Activated T-helper 1 cell treated with anti-CD3 and anti-CD28 coated beads, Interleukin-12 subunit alpha, Interleukin-12 subunit beta, Interleukin-2, Interleukin-4 antibody, amounts not matched to agents 30 ng/mL and 10 ng/mL and 1 ng/mL, durations not matched to agents 14 hours and 24 hours and 36 hours (primary cell): ENCODE measurements at regions of chr17 and their contacts with region 1.

Region 1: DNA sequence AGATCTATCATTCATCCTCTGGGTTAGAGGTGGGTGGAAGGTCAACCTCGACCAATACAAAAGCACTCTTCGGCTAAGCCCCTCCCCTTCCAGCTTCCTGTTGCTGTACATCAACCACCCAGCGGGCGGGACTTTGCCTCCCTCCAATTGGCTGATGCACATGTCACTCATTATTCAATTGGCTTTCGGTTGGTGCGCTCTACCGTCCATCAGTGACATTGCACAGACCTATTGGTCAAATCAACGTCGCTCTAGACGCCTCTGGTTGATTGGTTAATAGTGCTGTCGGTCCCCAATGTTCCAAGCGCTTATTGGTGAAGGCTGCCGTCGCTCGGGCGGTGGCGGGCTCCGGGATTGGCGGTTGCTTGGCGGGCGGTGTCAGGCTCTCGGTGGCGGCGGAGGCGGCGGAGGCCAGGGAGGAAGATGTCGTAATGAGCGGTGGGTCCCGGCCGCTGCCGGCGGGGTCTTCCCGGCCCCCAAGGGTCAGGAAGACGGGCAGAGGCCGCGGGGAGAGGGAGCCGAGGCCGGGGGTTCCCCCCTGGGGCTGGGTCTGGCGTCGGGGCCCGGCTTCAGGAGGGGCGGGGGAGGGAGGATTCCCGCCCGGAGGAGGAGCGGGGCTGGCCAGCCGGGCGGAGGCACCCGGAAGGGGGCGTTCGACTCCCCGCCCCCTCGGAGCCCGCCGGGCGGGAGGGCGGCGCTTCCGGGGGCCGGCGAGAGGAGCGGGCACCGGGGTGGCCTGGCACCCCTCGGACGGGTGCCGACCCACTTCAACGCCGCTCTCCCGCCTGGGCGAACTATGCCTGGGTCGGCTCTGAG is at the start of gene SP2:
- DNase-seq: peak; percentile 100
- H3K4me3 Mint-ChIP-seq: peak within 1 kb of the TSS; percentile 98
- H3K27ac Mint-ChIP-seq: peak within 1 kb of the TSS; percentile 100
- H3K4me1 Mint-ChIP-seq: peaks cover 47% of the 10 kb centered on the region
- H3K27me3 Mint-ChIP-seq: peaks cover 3% of the 10 kb centered on the region
- total RNA-seq, gene SP2: 24.0 and 26.3 TPM in 2 replicates

Region 2: GRCh38 chr17:47831003-47831933 is 64.8 kb before region 1 on chr17 and contains the starts of genes LRRC46 and MRPL10:
- intact Hi-C with region 1: loop called (anchors 1 kb)
- DNase-seq: peak; percentile 92
- H3K4me3 Mint-ChIP-seq: peak within 1 kb of the TSS; percentile 90
- H3K27ac Mint-ChIP-seq: peak within 1 kb of the TSS; percentile 88
- H3K4me1 Mint-ChIP-seq: peaks cover 43% of the 10 kb centered on the region
- H3K27me3 Mint-ChIP-seq: peaks cover 1% of the 10 kb centered on the region
- total RNA-seq, gene LRRC46: 0.39 and 0.70 TPM in 2 replicates
- total RNA-seq, gene MRPL10: 53.6 and 56.9 TPM in 2 replicates

Region 3: GRCh38 chr17:47949136-47949759 is 53.2 kb after region 1 on chr17:
- intact Hi-C with region 1: loop called (anchors 1 kb)
- DNase-seq: peak; percentile 76
- H3K4me3 Mint-ChIP-seq: peak overlapping the region; percentile 70
- H3K27ac Mint-ChIP-seq: peak overlapping the region; percentile 76
- H3K4me1 Mint-ChIP-seq: peaks cover 41% of the 10 kb centered on the region
- H3K27me3 Mint-ChIP-seq: no peaks in the 10 kb centered on the region

Region 4: DNA sequence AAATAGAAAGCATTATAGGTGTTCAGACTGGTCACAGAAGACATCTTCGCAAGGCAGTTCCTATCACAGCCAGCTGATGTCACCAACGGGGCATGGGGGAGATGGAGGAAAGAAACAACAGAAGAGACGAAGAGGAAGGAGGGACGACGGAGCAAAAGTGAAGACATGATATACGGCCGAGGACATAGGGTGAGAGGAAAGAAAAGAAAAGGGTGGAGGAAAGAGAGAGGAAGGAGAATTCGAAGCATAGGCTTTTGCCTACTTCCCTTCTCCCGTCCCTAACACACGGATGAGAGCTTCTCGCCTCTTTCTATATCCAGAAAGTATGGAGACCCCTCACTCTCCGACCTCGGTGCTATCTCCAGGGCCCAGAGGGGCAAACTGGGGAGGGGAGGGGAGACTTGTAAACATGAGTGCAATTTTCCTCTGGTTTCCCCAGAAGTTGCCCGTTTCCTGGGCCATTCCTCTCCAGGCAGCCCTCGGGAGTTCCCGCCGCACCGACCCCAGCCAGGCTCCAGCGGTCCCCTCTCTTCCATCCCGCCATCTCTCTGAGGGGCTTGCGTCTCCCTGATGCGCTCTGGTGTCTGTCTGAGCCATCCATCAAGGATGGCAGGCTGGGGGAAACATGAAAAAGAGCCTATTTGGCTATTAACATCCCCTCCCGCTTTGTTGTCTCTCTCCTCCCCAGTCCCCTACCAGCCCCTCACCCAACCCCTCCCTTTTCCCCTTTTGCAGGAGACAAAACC is 115.5 kb after region 1 on chr17:
- intact Hi-C with region 1: loop called (anchors 5 kb)
- DNase-seq: peak; percentile 44
- H3K4me3 Mint-ChIP-seq: peak overlapping the region; percentile 84
- H3K27ac Mint-ChIP-seq: peak overlapping the region; percentile 37
- H3K4me1 Mint-ChIP-seq: peaks cover 6% of the 10 kb centered on the region
- H3K27me3 Mint-ChIP-seq: peaks cover 24% of the 10 kb centered on the region

Region 5: DNA sequence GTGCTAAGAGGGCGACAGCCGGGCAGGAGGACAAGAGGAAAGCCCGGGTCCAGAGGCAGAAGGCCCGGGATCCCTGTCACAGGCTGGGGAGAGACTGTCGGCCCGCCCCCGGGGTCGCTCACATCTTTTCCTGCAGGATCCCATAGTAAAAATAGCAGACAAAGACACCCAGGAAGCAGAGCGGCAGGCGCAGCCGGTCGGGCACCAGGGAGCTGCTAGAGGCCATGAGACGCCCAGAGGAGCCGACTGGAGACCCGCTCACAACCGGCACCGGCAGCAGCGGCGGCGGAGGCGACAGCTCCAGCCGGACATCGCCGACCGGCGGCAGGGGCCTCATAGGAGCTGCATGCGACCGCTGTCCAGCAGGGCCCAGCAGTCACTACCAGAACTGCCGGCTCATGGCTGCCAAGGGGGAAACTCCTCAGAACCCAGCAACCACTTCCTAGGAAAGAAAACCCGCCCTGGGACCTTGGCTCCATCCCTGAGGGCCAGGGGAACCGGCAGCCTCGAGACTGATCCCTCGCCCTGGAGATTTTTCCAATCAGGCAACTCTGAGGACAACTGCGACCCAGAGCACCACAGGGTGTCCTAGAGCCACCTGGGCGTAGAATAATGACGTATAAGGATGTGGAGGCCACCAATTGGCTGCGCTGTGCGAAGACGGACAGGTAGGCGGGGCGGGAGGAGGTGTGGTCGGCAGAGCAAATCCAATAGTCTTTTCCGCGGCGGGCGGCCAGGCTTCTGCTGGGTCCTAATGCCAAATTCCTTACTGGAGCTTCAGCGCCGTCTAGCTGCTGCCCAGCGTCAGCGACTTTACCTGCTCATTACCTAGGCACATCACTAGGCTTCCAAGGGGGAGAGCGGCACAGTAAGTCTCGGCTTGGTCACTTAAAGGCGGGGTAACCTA is 1811.8 kb after region 1 on chr17 and contains the start of gene SLC35B1:
- intact Hi-C with region 1: no loop called
- DNase-seq: peak; percentile 97
- H3K4me3 Mint-ChIP-seq: peak within 1 kb of the TSS; percentile 98
- H3K27ac Mint-ChIP-seq: peak within 1 kb of the TSS; percentile 97
- H3K4me1 Mint-ChIP-seq: peaks cover 40% of the 10 kb centered on the region
- H3K27me3 Mint-ChIP-seq: peaks cover 1% of the 10 kb centered on the region
- total RNA-seq, gene SLC35B1: 71.6 and 75.4 TPM in 2 replicates